GM12878 (cell line): ENCODE measurements at regions of chr7 and their contacts with region 1.

Region 1: GRCh38 chr7:36986429-36987362 is 262.4 kb upstream of the AOAH start:
- DNase-seq: no peak
- ATAC-seq: peak; percentile 93
- H3K4me3 ChIP-seq: no peak overlapping the region
- H3K27ac ChIP-seq: no peak overlapping the region
- H3K4me1 ChIP-seq: no peaks in the 10 kb centered on the region
- H3K27me3 ChIP-seq: no peaks in the 10 kb centered on the region
- CTCF ChIP-seq: peak; percentile 83 to 92 (median 89)
- EP300 ChIP-seq: no peak
- POLR2A ChIP-seq: no peak
- RAD21 ChIP-seq: peak; percentile 87

Region 2: DNA sequence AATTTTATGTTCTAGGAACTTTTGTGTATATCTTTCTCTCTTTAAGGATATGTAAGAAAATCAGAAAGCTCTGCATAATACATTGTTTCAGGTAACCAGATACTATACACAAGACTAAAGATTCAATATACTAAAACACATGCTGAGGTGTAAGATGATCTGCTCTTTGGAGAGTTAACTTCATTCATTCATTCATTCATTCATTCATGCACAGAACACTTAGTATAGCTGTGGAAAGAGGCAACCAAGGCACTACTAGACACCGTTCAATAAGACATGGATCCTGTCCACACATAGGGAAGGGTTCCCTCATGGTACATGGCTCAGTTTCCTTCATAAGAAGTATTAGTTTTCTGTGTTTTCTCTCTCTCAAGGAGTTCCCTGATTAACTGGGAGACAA is 54.8 kb before region 1 on chr7:
- CTCF ChIA-PET with region 1: no interaction called
- POLR2A ChIA-PET with region 1: no interaction called
- RAD21 ChIA-PET with region 1: no interaction called
- SMC1A ChIA-PET with region 1: no interaction called
- in situ Hi-C with region 1: no loop called
- intact Hi-C with region 1: no loop called
- DNase-seq: no peak
- ATAC-seq: no peak
- H3K4me3 ChIP-seq: no peak overlapping the region
- H3K27ac ChIP-seq: no peak overlapping the region
- H3K4me1 ChIP-seq: no peaks in the 10 kb centered on the region
- H3K27me3 ChIP-seq: no peaks in the 10 kb centered on the region
- CTCF ChIP-seq: no peak
- EP300 ChIP-seq: no peak
- POLR2A ChIP-seq: no peak
- RAD21 ChIP-seq: no peak

Region 3: GRCh38 chr7:36967387-36967786 is 19.3 kb before region 1 on chr7:
- CTCF ChIA-PET with region 1: interaction called, 53 read pairs
- POLR2A ChIA-PET with region 1: interaction called, 3 read pairs
- RAD21 ChIA-PET with region 1: interaction called, 9 read pairs
- SMC1A ChIA-PET with region 1: interaction called, 50 read pairs
- in situ Hi-C with region 1: no loop called
- intact Hi-C with region 1: no loop called
- DNase-seq: no peak
- ATAC-seq: peak; percentile 98
- H3K4me3 ChIP-seq: no peak overlapping the region
- H3K27ac ChIP-seq: no peak overlapping the region
- H3K4me1 ChIP-seq: no peaks in the 10 kb centered on the region
- H3K27me3 ChIP-seq: no peaks in the 10 kb centered on the region
- CTCF ChIP-seq: peak; percentile 51 to 70 (median 53)
- EP300 ChIP-seq: no peak
- POLR2A ChIP-seq: no peak
- RAD21 ChIP-seq: no peak

Region 4: GRCh38 chr7:37016064-37016878 is 29.6 kb after region 1 on chr7:
- CTCF ChIA-PET with region 1: interaction called, 13 read pairs
- POLR2A ChIA-PET with region 1: interaction called, 3 read pairs
- RAD21 ChIA-PET with region 1: interaction called, 16 read pairs
- SMC1A ChIA-PET with region 1: interaction called, 10 read pairs
- in situ Hi-C with region 1: no loop called
- intact Hi-C with region 1: no loop called
- DNase-seq: no peak
- ATAC-seq: peak; percentile 57
- H3K4me3 ChIP-seq: no peak overlapping the region
- H3K27ac ChIP-seq: no peak overlapping the region
- H3K4me1 ChIP-seq: peaks cover 16% of the 10 kb centered on the region
- H3K27me3 ChIP-seq: no peaks in the 10 kb centered on the region
- CTCF ChIP-seq: no peak
- EP300 ChIP-seq: no peak
- POLR2A ChIP-seq: no peak
- RAD21 ChIP-seq: no peak

Region 5: DNA sequence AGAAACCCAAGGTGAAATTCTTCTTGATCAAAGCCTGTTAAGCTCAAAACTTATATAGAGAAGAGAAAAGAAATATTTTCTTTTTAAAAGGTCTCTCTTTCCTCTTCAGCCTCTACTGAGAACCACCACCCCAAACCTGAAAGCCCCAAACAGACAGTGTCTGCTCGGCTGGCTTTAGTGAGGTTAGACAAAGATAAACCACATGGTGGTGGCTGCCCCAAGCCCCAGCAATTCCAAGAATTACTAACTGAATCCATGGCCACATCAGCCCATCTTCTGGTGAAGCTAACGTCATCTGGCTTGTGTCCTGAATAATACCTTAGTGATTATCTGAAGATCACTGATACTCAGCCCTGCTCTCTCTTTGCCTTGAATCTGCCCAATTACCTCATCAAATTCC is 187.0 kb after region 1 on chr7:
- CTCF ChIA-PET with region 1: interaction called, 12 read pairs
- POLR2A ChIA-PET with region 1: no interaction called
- RAD21 ChIA-PET with region 1: interaction called, 5 read pairs
- SMC1A ChIA-PET with region 1: interaction called, 104 read pairs
- in situ Hi-C with region 1: no loop called
- intact Hi-C with region 1: no loop called
- DNase-seq: no peak
- ATAC-seq: no peak
- H3K4me3 ChIP-seq: no peak overlapping the region
- H3K27ac ChIP-seq: no peak overlapping the region
- H3K4me1 ChIP-seq: no peaks in the 10 kb centered on the region
- H3K27me3 ChIP-seq: no peaks in the 10 kb centered on the region
- CTCF ChIP-seq: no peak
- EP300 ChIP-seq: no peak
- POLR2A ChIP-seq: no peak
- RAD21 ChIP-seq: no peak

Region 6: GRCh38 chr7:37592366-37592765 is 605.7 kb after region 1 on chr7:
- CTCF ChIA-PET with region 1: no interaction called
- POLR2A ChIA-PET with region 1: no interaction called
- RAD21 ChIA-PET with region 1: no interaction called
- SMC1A ChIA-PET with region 1: no interaction called
- in situ Hi-C with region 1: no loop called
- intact Hi-C with region 1: no loop called
- DNase-seq: peak; percentile 4
- ATAC-seq: no peak
- H3K4me3 ChIP-seq: no peak overlapping the region
- H3K27ac ChIP-seq: no peak overlapping the region
- H3K4me1 ChIP-seq: no peaks in the 10 kb centered on the region
- H3K27me3 ChIP-seq: no peaks in the 10 kb centered on the region
- CTCF ChIP-seq: no peak
- EP300 ChIP-seq: no peak
- POLR2A ChIP-seq: no peak
- RAD21 ChIP-seq: no peak